B cell (primary cell): ENCODE measurements at regions of chr10 and their contacts with region 1.

Region 1: DNA sequence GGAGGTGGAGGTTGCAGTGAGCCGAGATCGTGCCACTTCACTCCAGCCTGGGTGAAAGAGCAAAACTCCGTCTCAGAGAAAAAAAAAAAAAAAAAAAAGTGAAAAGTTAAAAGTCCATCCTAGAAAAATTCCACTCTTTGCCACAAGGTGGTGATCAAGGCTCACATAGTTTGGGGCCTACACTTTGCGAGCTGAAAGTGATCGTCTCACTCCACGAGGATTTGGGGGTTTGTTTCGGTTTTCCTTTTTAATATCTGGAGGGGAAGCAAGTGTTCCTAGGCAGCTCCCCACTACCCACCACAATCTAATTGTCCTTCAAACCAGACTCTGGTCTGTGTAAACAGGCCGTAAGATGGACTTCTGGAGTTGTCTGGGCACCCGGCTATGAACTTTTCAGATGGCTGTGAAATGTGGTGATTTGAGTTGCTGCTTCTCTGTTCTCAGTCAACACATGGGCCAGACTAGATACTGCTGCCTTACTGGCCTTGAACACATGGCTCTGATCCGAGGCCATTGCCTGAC is 27.1 kb downstream of the PRLHR start:
- DNase-seq: peak; percentile 71
- ATAC-seq: peak; percentile 53
- H3K4me3 ChIP-seq: no peak overlapping the region
- H3K4me3 Mint-ChIP-seq: no peak overlapping the region
- H3K27ac ChIP-seq: no peak overlapping the region
- H3K27ac Mint-ChIP-seq: no peak overlapping the region
- H3K4me1 ChIP-seq: no peaks in the 10 kb centered on the region
- H3K4me1 Mint-ChIP-seq: no peaks in the 10 kb centered on the region
- H3K27me3 ChIP-seq: no peaks in the 10 kb centered on the region
- H3K27me3 Mint-ChIP-seq: peaks cover 15% of the 10 kb centered on the region
- CTCF ChIP-seq: peak; percentile 81

Region 2: GRCh38 chr10:118531105-118531852 is 37.1 kb before region 1 on chr10:
- CTCF ChIA-PET with region 1: no interaction called
- POLR2A ChIA-PET with region 1: no interaction called
- intact Hi-C with region 1: no loop called
- DNase-seq: no peak
- ATAC-seq: no peak
- H3K4me3 ChIP-seq: no peak overlapping the region
- H3K4me3 Mint-ChIP-seq: no peak overlapping the region
- H3K27ac ChIP-seq: no peak overlapping the region
- H3K27ac Mint-ChIP-seq: no peak overlapping the region
- H3K4me1 ChIP-seq: no peaks in the 10 kb centered on the region
- H3K4me1 Mint-ChIP-seq: no peaks in the 10 kb centered on the region
- H3K27me3 ChIP-seq: peaks cover 0 to 7% (median 0%) of the 10 kb centered on the region in 4 experiments
- H3K27me3 Mint-ChIP-seq: peaks cover 12% of the 10 kb centered on the region
- CTCF ChIP-seq: no peak

Region 3: GRCh38 chr10:118594392-118595063 is 26.1 kb after region 1 on chr10:
- CTCF ChIA-PET with region 1: no interaction called
- POLR2A ChIA-PET with region 1: no interaction called
- intact Hi-C with region 1: no loop called
- DNase-seq: no peak
- ATAC-seq: no peak
- H3K4me3 ChIP-seq: no peak overlapping the region
- H3K4me3 Mint-ChIP-seq: no peak overlapping the region
- H3K27ac ChIP-seq: no peak overlapping the region
- H3K27ac Mint-ChIP-seq: no peak overlapping the region
- H3K4me1 ChIP-seq: no peaks in the 10 kb centered on the region
- H3K4me1 Mint-ChIP-seq: peaks cover 7% of the 10 kb centered on the region
- H3K27me3 ChIP-seq: peaks cover 0 to 50% (median 18%) of the 10 kb centered on the region in 4 experiments
- H3K27me3 Mint-ChIP-seq: peaks cover 66% of the 10 kb centered on the region
- CTCF ChIP-seq: no peak

Region 4: DNA sequence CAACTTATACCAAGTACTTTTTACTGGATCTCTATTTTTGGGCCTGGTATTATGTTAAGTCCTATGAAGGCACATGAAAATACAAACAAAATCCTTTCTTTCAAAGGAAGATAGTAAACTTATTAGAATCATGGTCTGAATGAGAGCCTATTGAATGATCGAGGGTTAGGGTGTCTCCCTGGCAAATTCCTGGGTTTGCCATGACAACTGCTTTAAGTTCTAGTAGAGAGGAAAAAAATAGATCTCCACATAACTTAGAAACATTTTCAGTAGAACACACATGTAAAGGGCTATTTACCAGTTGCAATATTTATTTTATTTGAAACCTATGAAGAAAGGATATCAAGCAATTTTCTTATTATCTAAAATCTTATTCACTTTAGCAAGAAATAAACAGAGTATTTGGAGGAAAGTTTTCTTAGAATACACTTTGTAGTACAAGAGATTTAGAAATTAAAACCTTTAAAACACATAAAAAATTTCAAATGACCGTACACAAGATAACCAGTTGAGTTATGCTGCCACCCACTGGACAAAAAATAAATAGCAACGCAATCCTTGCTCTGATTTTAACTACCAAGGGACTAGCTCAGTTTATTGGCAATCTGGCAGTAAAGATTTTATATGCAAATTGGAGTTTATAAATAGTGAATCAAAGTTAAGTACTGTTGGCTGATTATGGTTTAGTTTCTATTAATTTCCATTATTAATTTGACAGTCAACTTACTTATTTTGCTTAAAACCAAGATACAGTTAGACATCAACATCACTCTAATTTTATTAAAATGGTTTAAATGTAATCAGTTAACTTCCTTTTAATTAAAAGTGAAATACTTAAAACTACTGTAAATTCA is 152.5 kb after region 1 on chr10:
- CTCF ChIA-PET with region 1: interaction called, 52 read pairs
- POLR2A ChIA-PET with region 1: no interaction called
- intact Hi-C with region 1: loop called (anchors 1 kb)
- DNase-seq: peak; percentile 71
- ATAC-seq: peak; percentile 39
- H3K4me3 ChIP-seq: no peak overlapping the region
- H3K4me3 Mint-ChIP-seq: no peak overlapping the region
- H3K27ac ChIP-seq: no peak overlapping the region
- H3K27ac Mint-ChIP-seq: no peak overlapping the region
- H3K4me1 ChIP-seq: no peaks in the 10 kb centered on the region
- H3K4me1 Mint-ChIP-seq: peaks cover 13% of the 10 kb centered on the region
- H3K27me3 ChIP-seq: no peaks in the 10 kb centered on the region
- H3K27me3 Mint-ChIP-seq: no peaks in the 10 kb centered on the region
- CTCF ChIP-seq: peak; percentile 97

Region 5: GRCh38 chr10:118800920-118801319 is 232.5 kb after region 1 on chr10:
- CTCF ChIA-PET with region 1: interaction called, 40 read pairs
- POLR2A ChIA-PET with region 1: no interaction called
- intact Hi-C with region 1: loop called (anchors 1 kb)
- DNase-seq: peak; percentile 15
- ATAC-seq: no peak
- H3K4me3 ChIP-seq: no peak overlapping the region
- H3K4me3 Mint-ChIP-seq: no peak overlapping the region
- H3K27ac ChIP-seq: no peak overlapping the region
- H3K27ac Mint-ChIP-seq: no peak overlapping the region
- H3K4me1 ChIP-seq: no peaks in the 10 kb centered on the region
- H3K4me1 Mint-ChIP-seq: no peaks in the 10 kb centered on the region
- H3K27me3 ChIP-seq: no peaks in the 10 kb centered on the region
- H3K27me3 Mint-ChIP-seq: peaks cover 31% of the 10 kb centered on the region
- CTCF ChIP-seq: peak; percentile 38

Region 6: GRCh38 chr10:118850418-118851061 is 282.2 kb after region 1 on chr10:
- CTCF ChIA-PET with region 1: interaction called, 13 read pairs
- POLR2A ChIA-PET with region 1: no interaction called
- intact Hi-C with region 1: loop called (anchors 1 kb)
- DNase-seq: peak; percentile 52
- ATAC-seq: peak; percentile 36
- H3K4me3 ChIP-seq: no peak overlapping the region
- H3K4me3 Mint-ChIP-seq: no peak overlapping the region
- H3K27ac ChIP-seq: no peak overlapping the region
- H3K27ac Mint-ChIP-seq: no peak overlapping the region
- H3K4me1 ChIP-seq: no peaks in the 10 kb centered on the region
- H3K4me1 Mint-ChIP-seq: no peaks in the 10 kb centered on the region
- H3K27me3 ChIP-seq: peaks cover 0 to 4% (median 0%) of the 10 kb centered on the region in 4 experiments
- H3K27me3 Mint-ChIP-seq: peaks cover 14% of the 10 kb centered on the region
- CTCF ChIP-seq: peak; percentile 66